ENCODE measurements at regions of chr15 and their contacts with region 1.

Region 1: GRCh38 chr15:77496710-77497103 is 76.0 kb downstream of the HMG20A start:
- DNase-seq: peak; percentile 69
- H3K4me3 ChIP-seq: peak overlapping the region in 1 of 3 experiments; percentile 24
- H3K27ac ChIP-seq: no peak overlapping the region
- H3K4me1 ChIP-seq: peaks cover 28% of the 10 kb centered on the region
- H3K27me3 ChIP-seq: no peaks in the 10 kb centered on the region
- CTCF ChIP-seq: peak; percentile 92 to 97

Region 2: DNA sequence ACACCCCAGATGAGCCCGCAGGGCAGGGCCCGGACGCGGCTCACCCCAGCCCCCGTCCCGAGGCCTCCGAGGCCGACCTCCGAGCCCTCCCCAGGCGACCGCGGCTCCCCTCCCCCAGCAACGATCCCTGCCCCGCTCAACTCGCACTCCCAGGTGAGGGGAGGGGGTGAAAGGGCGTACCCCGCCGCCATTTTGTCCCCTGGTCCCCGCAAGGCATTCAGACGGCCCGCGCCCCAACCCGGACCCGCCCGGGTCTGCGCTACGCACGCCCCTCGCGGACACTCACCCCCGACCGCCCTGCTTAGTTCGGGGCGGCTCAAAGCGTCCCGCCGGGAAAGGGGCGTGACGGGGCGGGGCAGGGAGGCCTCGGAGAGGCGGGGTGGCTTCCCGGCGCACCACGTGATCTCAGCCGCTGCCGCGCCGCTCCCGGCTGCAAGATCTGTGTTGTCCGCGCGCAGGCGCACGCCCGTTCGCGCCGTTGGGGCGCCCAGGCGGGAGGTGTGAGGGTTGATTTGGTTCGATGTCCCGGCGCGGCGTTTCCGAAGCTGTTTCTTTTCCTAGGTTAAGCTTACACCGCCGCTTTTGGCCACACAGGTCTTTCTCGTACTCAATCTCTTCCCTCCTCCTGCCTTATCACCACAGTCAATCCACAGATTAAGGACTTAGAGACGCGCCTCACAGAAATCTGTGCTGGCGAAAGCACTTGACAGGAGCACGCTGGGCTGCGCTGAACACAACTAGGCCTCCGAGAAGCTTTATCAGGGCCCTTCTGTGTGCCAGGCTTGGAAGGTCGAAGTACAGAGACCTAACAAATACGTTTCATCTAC is 591.5 kb before region 1 on chr15 and contains the start of gene SCAPER:
- CTCF ChIA-PET with region 1: no interaction called
- dilution Hi-C with region 1: no loop called
- in situ Hi-C with region 1: no loop called
- intact Hi-C with region 1: loop called (anchors 10 kb)
- DNase-seq: peak; percentile 84
- H3K4me3 ChIP-seq: peak within 1 kb of the TSS; percentile 85 to 97 (median 91)
- H3K27ac ChIP-seq: peak within 1 kb of the TSS; percentile 43
- H3K4me1 ChIP-seq: peaks cover 12% of the 10 kb centered on the region
- H3K27me3 ChIP-seq: no peaks in the 10 kb centered on the region
- CTCF ChIP-seq: no peak
- total RNA-seq, gene SCAPER: 9.2 to 11.6 TPM

Region 3: GRCh38 chr15:77118882-77119321 is 377.8 kb before region 1 on chr15:
- CTCF ChIA-PET with region 1: interaction called, 3 read pairs
- dilution Hi-C with region 1: no loop called
- in situ Hi-C with region 1: no loop called
- intact Hi-C with region 1: loop called (anchors 1 kb)
- DNase-seq: peak; percentile 40
- H3K4me3 ChIP-seq: no peak overlapping the region
- H3K27ac ChIP-seq: no peak overlapping the region
- H3K4me1 ChIP-seq: no peaks in the 10 kb centered on the region
- H3K27me3 ChIP-seq: no peaks in the 10 kb centered on the region
- CTCF ChIP-seq: peak; percentile 81 to 83

Region 4: DNA sequence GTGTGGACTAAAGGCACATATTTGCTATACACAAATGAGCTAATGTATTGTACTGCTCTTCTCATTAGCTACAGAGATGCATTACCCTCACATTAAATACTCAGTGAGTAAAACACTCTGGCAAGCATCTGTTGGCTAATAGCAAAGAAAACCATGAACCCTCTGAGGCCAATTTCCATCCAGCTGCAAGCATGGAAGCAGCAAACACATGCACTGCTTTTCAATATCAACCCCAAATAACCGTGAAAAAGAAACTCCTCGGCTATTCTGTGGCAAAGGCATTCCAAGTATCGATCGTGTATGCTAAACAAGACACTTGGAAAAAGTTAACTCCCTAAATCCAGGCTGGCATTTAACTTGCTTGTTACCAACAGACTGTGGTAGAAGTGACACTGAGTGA is 143.8 kb before region 1 on chr15:
- CTCF ChIA-PET with region 1: no interaction called
- dilution Hi-C with region 1: no loop called
- in situ Hi-C with region 1: no loop called
- intact Hi-C with region 1: loop called (anchors 10 kb)
- DNase-seq: no peak
- H3K4me3 ChIP-seq: no peak overlapping the region
- H3K27ac ChIP-seq: no peak overlapping the region
- H3K4me1 ChIP-seq: peaks cover 9% of the 10 kb centered on the region
- H3K27me3 ChIP-seq: no peaks in the 10 kb centered on the region
- CTCF ChIP-seq: no peak

Region 5: GRCh38 chr15:77543159-77543882 is 46.6 kb after region 1 on chr15:
- CTCF ChIA-PET with region 1: interaction called, 9 read pairs
- dilution Hi-C with region 1: no loop called
- in situ Hi-C with region 1: no loop called
- intact Hi-C with region 1: loop called (anchors 1 kb)
- DNase-seq: peak; percentile 77
- H3K4me3 ChIP-seq: peak overlapping the region in 2 of 3 experiments; percentile 40 to 43
- H3K27ac ChIP-seq: peak overlapping the region; percentile 9
- H3K4me1 ChIP-seq: peaks cover 27% of the 10 kb centered on the region
- H3K27me3 ChIP-seq: no peaks in the 10 kb centered on the region
- CTCF ChIP-seq: peak; percentile 82 to 97

Region 6: GRCh38 chr15:77702211-77702957 is 205.7 kb after region 1 on chr15:
- CTCF ChIA-PET with region 1: no interaction called
- dilution Hi-C with region 1: no loop called
- in situ Hi-C with region 1: no loop called
- intact Hi-C with region 1: no loop called
- DNase-seq: peak; percentile 21
- H3K4me3 ChIP-seq: no peak overlapping the region
- H3K27ac ChIP-seq: no peak overlapping the region
- H3K4me1 ChIP-seq: no peaks in the 10 kb centered on the region
- H3K27me3 ChIP-seq: no peaks in the 10 kb centered on the region
- CTCF ChIP-seq: no peak

Measured in mammary epithelial cell (primary cell).